Naive thymus-derived CD4-positive, alpha-beta T cell (primary cell): ENCODE measurements at regions of chr3 and their contacts with region 1.

Region 1: GRCh38 chr3:30199096-30199759 is 407.2 kb upstream of the TGFBR2 start:
- DNase-seq: peak; percentile 25 to 66 (median 58)
- ATAC-seq: peak; percentile 61
- H3K4me3 ChIP-seq: no peak overlapping the region
- H3K4me3 Mint-ChIP-seq: no peak overlapping the region
- H3K27ac ChIP-seq: no peak overlapping the region
- H3K27ac Mint-ChIP-seq: no peak overlapping the region
- H3K4me1 ChIP-seq: no peaks in the 10 kb centered on the region
- H3K4me1 Mint-ChIP-seq: peaks cover 0 to 7% (median 4%) of the 10 kb centered on the region in 7 donors
- H3K27me3 ChIP-seq: no peaks in the 10 kb centered on the region
- H3K27me3 Mint-ChIP-seq: peaks cover 0 to 6% (median 0%) of the 10 kb centered on the region in 5 donors

Region 2: GRCh38 chr3:30012941-30013543 is 186.2 kb before region 1 on chr3:
- CTCF ChIA-PET with region 1: interaction called, 3 read pairs
- POLR2A ChIA-PET with region 1: no interaction called
- intact Hi-C with region 1: loop called in 1 of 2 experiments (anchors 1 kb)
- DNase-seq: peak in 8 of 9 donors; percentile 4 to 32 (median 22)
- ATAC-seq: peak; percentile 56
- H3K4me3 ChIP-seq: no peak overlapping the region
- H3K4me3 Mint-ChIP-seq: no peak overlapping the region
- H3K27ac ChIP-seq: no peak overlapping the region
- H3K27ac Mint-ChIP-seq: no peak overlapping the region
- H3K4me1 ChIP-seq: no peaks in the 10 kb centered on the region
- H3K4me1 Mint-ChIP-seq: peaks cover 0 to 5% (median 0%) of the 10 kb centered on the region in 7 donors
- H3K27me3 ChIP-seq: no peaks in the 10 kb centered on the region
- H3K27me3 Mint-ChIP-seq: peaks cover 0 to 13% (median 6%) of the 10 kb centered on the region in 5 donors

Region 3: GRCh38 chr3:30112902-30113484 is 86.2 kb before region 1 on chr3:
- CTCF ChIA-PET with region 1: interaction called, 4 read pairs
- POLR2A ChIA-PET with region 1: no interaction called
- intact Hi-C with region 1: loop called (anchors 1 kb)
- DNase-seq: peak in 7 of 9 donors; percentile 17 to 68 (median 55)
- ATAC-seq: peak; percentile 61
- H3K4me3 ChIP-seq: no peak overlapping the region
- H3K4me3 Mint-ChIP-seq: no peak overlapping the region
- H3K27ac ChIP-seq: no peak overlapping the region
- H3K27ac Mint-ChIP-seq: no peak overlapping the region
- H3K4me1 ChIP-seq: no peaks in the 10 kb centered on the region
- H3K4me1 Mint-ChIP-seq: peaks cover 4 to 8% (median 6%) of the 10 kb centered on the region in 7 donors
- H3K27me3 ChIP-seq: no peaks in the 10 kb centered on the region
- H3K27me3 Mint-ChIP-seq: peaks cover 0 to 16% (median 9%) of the 10 kb centered on the region in 5 donors

Region 4: GRCh38 chr3:30628901-30629590 is 429.8 kb after region 1 on chr3:
- CTCF ChIA-PET with region 1: interaction called, 5 read pairs
- POLR2A ChIA-PET with region 1: no interaction called
- intact Hi-C with region 1: loop called in 1 of 2 experiments (anchors 1 kb)
- DNase-seq: peak in 2 of 9 donors; percentile 53 to 55
- ATAC-seq: peak; percentile 51
- H3K4me3 ChIP-seq: peak overlapping the region; percentile 29
- H3K4me3 Mint-ChIP-seq: peak overlapping the region; percentile 53 to 88 (median 72)
- H3K27ac ChIP-seq: peak overlapping the region; percentile 68
- H3K27ac Mint-ChIP-seq: peak overlapping the region; percentile 84 to 98 (median 96)
- H3K4me1 ChIP-seq: peaks cover 81 to 97% of the 10 kb centered on the region in 2 donors
- H3K4me1 Mint-ChIP-seq: peaks cover 64 to 100% (median 93%) of the 10 kb centered on the region in 7 donors
- H3K27me3 ChIP-seq: no peaks in the 10 kb centered on the region
- H3K27me3 Mint-ChIP-seq: no peaks in the 10 kb centered on the region